Esophagus muscularis mucosa (tissue), 4 donors: ENCODE measurements at regions of chr2 and their contacts with region 1.

Region 1: DNA sequence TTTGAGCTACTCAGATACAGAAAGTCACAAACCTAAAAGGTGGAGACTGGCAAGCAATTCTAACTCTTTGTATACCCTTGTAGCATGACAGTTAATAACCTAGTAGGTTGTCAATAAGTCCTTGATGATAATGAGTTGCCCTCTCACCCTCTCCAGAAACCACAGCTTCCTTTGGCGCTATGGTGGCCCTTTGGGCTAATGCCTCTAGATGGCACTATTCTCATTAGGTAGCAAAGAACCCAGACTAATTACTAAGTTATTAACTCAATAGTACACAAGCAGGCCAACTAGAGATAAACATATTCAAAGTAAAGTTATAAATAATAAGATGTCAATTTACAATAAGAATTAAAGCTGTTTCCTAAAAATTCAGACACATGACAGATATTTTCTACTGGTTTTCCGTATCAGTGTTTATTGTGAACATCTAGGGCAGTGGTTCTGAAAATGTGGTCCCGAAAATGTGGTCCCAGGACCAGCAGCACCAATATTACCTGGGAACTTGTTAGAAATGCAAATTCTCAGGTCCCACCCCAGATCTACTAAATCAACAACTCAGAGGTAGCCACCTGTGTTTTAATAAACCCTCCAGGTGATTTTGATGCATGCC is 41.1 kb downstream of the LDAH start:
- DNase-seq: no peak
- H3K4me3 ChIP-seq: no peak overlapping the region
- H3K27ac ChIP-seq: no peak overlapping the region
- H3K4me1 ChIP-seq: no peaks in the 10 kb centered on the region
- H3K27me3 ChIP-seq: no peaks in the 10 kb centered on the region
- CTCF ChIP-seq: peak; percentile 51 to 67 (median 57)
- EP300 ChIP-seq: no peak
- POLR2A ChIP-seq: no peak

Region 2: DNA sequence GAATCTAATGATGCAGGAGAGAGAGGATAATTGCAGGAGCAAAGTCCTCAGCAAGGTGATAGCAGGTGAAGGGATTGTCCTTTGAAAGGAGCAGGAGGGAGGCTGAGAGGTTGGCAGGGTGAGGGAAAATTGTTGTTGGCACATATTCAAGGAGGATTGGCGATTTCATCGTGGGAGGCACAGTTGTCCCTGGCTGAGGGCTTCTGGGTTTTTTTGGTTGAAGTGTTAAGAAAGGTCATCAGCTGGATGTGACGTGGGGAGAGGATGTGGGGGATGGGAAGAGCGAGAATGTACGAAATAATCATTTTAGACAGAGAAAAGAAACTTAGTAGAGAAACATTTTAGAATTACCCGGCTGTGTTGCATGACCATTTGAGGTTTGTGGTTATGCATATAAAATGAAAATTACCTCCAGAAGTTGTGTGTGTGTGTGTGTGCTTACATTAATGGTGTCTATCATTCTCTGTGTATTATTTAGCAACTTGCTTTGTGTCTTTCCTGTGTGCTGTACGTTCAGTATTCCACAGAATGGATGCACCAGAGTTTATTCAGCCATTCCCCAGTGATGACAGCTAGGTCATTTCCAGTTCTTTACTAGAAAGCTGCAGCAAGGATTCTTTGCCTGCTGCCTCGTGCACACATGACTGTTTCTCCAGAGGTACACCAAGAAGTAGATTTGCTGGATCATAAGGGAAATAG is 624.4 kb before region 1 on chr2:
- intact Hi-C with region 1: no loop called
- DNase-seq: no peak
- H3K4me3 ChIP-seq: no peak overlapping the region
- H3K27ac ChIP-seq: no peak overlapping the region
- H3K4me1 ChIP-seq: no peaks in the 10 kb centered on the region
- H3K27me3 ChIP-seq: no peaks in the 10 kb centered on the region
- CTCF ChIP-seq: no peak
- EP300 ChIP-seq: no peak
- POLR2A ChIP-seq: no peak

Region 3: GRCh38 chr2:20962939-20963557 is 181.3 kb after region 1 on chr2:
- intact Hi-C with region 1: loop called (anchors 2 kb)
- DNase-seq: no peak
- H3K4me3 ChIP-seq: no peak overlapping the region
- H3K27ac ChIP-seq: no peak overlapping the region
- H3K4me1 ChIP-seq: peaks cover 0 to 18% (median 13%) of the 10 kb centered on the region in 4 donors
- H3K27me3 ChIP-seq: peaks cover 0 to 11% (median 0%) of the 10 kb centered on the region in 4 donors
- CTCF ChIP-seq: peak; percentile 86 to 88 (median 88)
- EP300 ChIP-seq: no peak
- POLR2A ChIP-seq: no peak